ENCODE measurements at regions of chr3 and their contacts with region 1.

Region 1: DNA sequence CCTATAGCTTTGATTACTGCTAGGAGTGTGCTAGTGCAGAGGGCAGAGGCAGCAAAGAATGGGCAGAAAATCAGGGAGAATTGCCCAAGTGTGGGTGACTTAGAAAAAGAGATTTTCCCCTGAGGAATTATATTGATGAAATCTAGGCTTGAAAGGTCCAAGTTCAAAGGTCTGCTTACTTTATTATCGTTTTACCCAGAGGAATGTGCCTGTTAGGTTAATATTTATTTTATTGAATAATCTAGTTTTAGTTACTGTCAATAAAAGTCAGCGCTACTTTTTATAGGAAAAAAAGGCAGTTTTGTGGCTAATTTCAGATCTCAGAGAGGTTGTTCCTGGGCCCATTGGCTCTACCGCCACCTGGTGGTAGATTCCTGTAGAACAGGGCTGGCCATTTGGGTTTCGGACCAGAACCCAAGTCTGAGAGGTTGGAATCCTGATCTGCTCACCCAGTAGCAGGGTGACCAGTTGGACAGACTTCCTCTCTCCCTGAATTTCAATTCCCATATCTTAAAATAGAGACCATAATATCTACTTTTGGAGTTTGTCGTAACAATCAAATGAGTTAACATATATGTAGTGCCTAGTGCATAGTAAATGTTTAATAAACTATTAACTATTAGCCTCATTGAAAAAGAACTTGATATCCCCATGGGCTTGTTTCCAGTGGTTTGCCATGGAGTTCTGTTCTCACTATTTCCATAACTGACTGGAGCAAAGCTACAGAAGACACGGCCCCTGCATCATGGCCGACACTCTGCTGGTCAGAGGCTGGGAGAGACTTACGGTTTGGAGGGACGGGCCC is 62.7 kb upstream of the ZNF148 start:
- DNase-seq: no peak
- ATAC-seq: peak; percentile 56

Region 2: GRCh38 chr3:125179143-125179883 is 258.5 kb before region 1 on chr3:
- intact Hi-C with region 1: no loop called
- DNase-seq: no peak
- ATAC-seq: no peak

Region 3: DNA sequence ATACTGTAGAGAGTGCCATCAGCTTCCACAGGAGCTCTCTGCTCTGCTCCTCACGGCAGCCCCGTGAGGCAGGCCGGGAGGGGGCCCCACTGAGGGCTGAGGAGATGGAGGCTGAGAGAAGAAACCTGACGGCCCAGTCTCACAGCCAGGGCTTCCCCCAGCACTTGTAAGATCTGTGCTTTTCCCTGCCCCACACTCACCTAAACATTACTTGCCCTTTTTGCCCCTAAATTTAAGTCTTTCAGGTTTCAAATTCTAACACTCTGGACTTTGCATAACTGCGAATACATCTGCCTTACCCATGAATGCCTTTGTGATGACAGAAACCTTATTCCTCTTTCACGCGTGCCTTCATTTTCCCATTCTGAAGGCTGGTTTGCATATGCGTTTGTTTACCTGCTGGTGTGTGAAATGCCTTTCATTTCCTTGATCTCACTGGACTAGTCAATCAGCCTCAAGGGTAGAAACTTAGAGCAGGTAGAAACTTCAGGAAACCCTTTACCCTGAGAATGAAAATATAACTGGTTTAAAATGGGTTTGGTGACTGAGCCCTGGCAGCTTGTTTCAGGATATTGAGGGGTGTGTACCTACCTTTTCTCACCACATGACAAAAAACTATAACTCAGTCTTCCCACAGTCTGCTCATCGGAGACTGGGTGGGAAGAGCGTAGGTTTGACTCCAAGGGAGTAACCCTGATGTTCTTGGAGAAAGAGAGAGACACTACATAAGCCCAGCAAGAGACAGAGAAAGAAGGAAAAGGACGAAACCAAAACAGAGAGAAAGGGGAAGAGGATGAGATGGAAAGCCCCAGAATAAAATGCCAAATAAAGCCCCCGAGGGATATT is 245.4 kb before region 1 on chr3:
- intact Hi-C with region 1: loop called (anchors 10 kb)
- DNase-seq: no peak
- ATAC-seq: no peak

Region 4: DNA sequence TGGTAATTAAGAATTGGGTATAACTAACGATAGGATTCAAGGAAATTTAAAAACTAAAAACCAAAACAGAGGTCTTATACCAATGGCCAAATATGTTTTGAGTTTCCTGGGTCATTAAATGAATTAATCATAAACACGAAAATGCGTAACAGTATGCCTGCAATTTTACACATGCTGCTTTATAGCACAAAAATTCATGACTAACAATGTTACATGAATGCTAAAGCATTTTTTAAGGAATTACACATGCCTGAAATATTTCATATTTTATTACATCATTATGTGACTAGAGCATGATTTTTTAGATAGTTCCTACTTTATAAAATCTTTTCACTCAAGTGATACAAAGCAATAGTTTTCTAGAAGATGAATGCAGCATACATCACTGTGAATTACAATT is 137.4 kb before region 1 on chr3:
- intact Hi-C with region 1: no loop called
- DNase-seq: no peak
- ATAC-seq: no peak

Region 5: GRCh38 chr3:125519678-125520589 is 82.1 kb after region 1 on chr3 and contains the start of gene SNX4:
- intact Hi-C with region 1: no loop called
- DNase-seq: peak; percentile 97
- ATAC-seq: peak; percentile 99
- total RNA-seq, gene SNX4: 19.8 TPM